HepG2 (cell line): ENCODE measurements at regions of chr11 and their contacts with region 1.

Region 1: GRCh38 chr11:117946842-117947526 is 17.8 kb upstream of the TMPRSS13 start:
- DNase-seq: peak; percentile 64
- ATAC-seq: peak; percentile 97
- H3K4me3 ChIP-seq: no peak overlapping the region
- H3K27ac ChIP-seq: no peak overlapping the region
- H3K4me1 ChIP-seq: no peaks in the 10 kb centered on the region
- H3K27me3 ChIP-seq: peaks cover 3 to 19% of the 10 kb centered on the region in 2 experiments; a peak in 2 of 5 replicates
- CTCF ChIP-seq: peak; percentile 95
- EP300 ChIP-seq: no peak
- POLR2A ChIP-seq: no peak
- RAD21 ChIP-seq: peak; percentile 85

Region 2: GRCh38 chr11:117426269-117426685 is 520.7 kb before region 1 on chr11:
- CTCF ChIA-PET with region 1: no interaction called
- POLR2A ChIA-PET with region 1: no interaction called
- in situ Hi-C with region 1: loop called (anchors 25 kb)
- intact Hi-C with region 1: loop called (anchors 10 kb)
- DNase-seq: peak; percentile 38
- ATAC-seq: peak; percentile 80
- H3K4me3 ChIP-seq: no peak overlapping the region
- H3K27ac ChIP-seq: no peak overlapping the region
- H3K4me1 ChIP-seq: peaks cover 4% of the 10 kb centered on the region; the same call in 1 of the 2 replicates
- H3K27me3 ChIP-seq: peaks cover 2 to 24% of the 10 kb centered on the region in 2 experiments; a peak in 4 of 5 replicates
- CTCF ChIP-seq: peak; percentile 95
- EP300 ChIP-seq: no peak
- POLR2A ChIP-seq: no peak
- RAD21 ChIP-seq: peak; percentile 79

Region 3: DNA sequence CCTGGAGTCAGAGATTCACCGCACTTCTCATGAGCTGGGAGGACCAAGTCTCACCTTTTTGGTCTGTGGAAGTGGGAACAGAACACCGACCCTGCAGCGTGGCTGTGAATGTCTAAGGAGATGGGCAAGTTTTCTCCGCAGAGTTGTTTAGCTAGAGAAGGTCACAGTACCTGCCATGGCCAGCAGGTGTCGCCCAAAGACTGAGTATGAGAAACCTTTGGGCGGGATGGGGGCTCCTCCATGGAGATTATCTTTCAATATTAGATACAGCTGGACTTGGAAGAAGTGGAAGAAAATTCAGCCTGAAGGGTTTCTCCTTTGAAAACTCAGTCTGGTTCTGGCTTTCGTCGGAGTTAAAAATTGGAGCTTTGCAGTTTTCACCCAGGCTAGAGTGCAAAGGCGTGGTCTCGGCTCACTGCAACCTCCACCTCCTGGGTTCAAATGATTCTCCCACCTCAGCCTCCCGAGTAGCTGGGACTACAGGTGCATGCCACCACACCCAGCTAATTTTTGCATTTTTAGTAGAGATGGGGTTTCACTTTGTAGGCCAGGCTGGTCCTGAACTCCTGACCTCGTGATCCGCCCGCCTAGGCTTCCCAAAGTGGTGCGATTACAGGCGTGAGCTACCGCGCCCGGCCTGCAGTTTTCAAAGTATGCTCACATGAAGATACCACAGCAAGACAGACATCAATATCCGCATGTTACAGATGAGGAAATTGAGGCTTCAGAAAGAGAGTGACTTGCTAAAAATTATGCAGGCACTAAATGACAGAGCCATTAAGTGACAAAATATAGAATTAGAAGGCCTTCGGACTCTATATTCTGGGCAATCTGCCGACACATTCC is 139.3 kb before region 1 on chr11:
- CTCF ChIA-PET with region 1: interaction called, 21 read pairs
- POLR2A ChIA-PET with region 1: interaction called, 3 read pairs
- in situ Hi-C with region 1: no loop called
- intact Hi-C with region 1: no loop called
- DNase-seq: no peak
- ATAC-seq: peak; percentile 56
- H3K4me3 ChIP-seq: no peak overlapping the region
- H3K27ac ChIP-seq: no peak overlapping the region
- H3K4me1 ChIP-seq: no peaks in the 10 kb centered on the region
- H3K27me3 ChIP-seq: no peaks in the 10 kb centered on the region; a peak in 1 of 5 replicates
- CTCF ChIP-seq: peak; percentile 80
- EP300 ChIP-seq: no peak
- POLR2A ChIP-seq: no peak
- RAD21 ChIP-seq: peak; percentile 57; the same call in 1 of the 2 replicates

Region 4: GRCh38 chr11:117817368-117818040 is 129.5 kb before region 1 on chr11:
- CTCF ChIA-PET with region 1: interaction called, 19 read pairs
- POLR2A ChIA-PET with region 1: no interaction called
- in situ Hi-C with region 1: loop called (anchors 5 kb)
- intact Hi-C with region 1: loop called (anchors 1 kb)
- DNase-seq: peak; percentile 49
- ATAC-seq: peak; percentile 45
- H3K4me3 ChIP-seq: peak overlapping the region in 1 of 3 experiments; percentile 61; a peak in 1 of 6 replicates
- H3K27ac ChIP-seq: no peak overlapping the region
- H3K4me1 ChIP-seq: peaks cover 73% of the 10 kb centered on the region
- H3K27me3 ChIP-seq: peaks cover 0 to 5% of the 10 kb centered on the region in 2 experiments; a peak in 1 of 5 replicates
- CTCF ChIP-seq: peak; percentile 92
- EP300 ChIP-seq: no peak
- POLR2A ChIP-seq: no peak
- RAD21 ChIP-seq: peak; percentile 71

Region 5: DNA sequence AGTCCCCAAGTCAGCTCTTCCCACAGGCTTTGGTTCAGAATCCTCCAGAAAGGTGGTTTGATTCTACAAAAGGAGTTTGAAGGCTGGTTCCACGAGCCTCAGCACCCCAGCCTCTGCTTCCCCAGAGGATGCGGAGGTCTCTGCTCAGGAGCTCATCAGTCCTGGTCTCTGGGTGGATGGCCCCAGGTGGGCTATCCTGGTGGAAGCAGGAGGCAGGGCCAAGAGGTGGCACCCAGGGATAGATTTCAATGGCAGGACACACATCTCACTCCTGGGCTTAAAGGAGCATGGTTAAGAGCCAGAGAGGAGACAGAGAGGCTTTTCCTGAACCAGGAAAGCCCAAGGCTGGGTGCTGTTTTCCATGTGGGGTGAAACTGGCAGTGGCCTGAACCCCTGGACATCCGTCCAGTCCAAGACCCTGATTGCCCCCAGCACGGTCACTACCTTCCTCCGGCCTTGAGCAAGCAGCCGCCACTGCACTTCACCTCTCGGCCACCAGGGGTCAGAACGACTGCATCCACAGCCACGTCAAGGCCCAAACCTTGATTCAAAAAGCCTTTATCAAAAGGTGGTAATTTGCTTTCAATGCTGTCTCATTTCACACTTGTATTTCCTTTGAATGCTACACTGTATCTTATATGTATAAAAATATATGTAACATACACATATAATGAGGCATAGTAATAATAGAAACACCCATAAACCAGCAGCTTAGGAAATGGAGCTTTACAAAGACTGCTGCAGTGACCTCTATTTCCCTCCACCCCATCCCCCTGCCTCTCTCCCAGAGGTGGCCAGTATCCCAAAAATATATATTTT is 103.1 kb before region 1 on chr11:
- CTCF ChIA-PET with region 1: interaction called, 33 read pairs
- POLR2A ChIA-PET with region 1: interaction called, 4 read pairs
- in situ Hi-C with region 1: no loop called
- intact Hi-C with region 1: loop called (anchors 1 kb)
- DNase-seq: no peak
- ATAC-seq: peak; percentile 83
- H3K4me3 ChIP-seq: no peak overlapping the region
- H3K27ac ChIP-seq: no peak overlapping the region
- H3K4me1 ChIP-seq: no peaks in the 10 kb centered on the region
- H3K27me3 ChIP-seq: peaks cover 8 to 27% of the 10 kb centered on the region in 2 experiments; a peak in 3 of 5 replicates
- CTCF ChIP-seq: peak; percentile 91
- EP300 ChIP-seq: no peak
- POLR2A ChIP-seq: no peak
- RAD21 ChIP-seq: peak; percentile 59; the same call in 1 of the 2 replicates

Region 6: GRCh38 chr11:117876341-117877119 is 70.5 kb before region 1 on chr11 and contains the start of gene FXYD6:
- CTCF ChIA-PET with region 1: no interaction called
- POLR2A ChIA-PET with region 1: no interaction called
- in situ Hi-C with region 1: no loop called
- intact Hi-C with region 1: no loop called
- DNase-seq: no peak
- ATAC-seq: no peak
- H3K4me3 ChIP-seq: no peak within 1 kb of the TSS
- H3K27ac ChIP-seq: no peak within 1 kb of the TSS
- H3K4me1 ChIP-seq: no peaks in the 10 kb centered on the region
- H3K27me3 ChIP-seq: peaks cover 10 to 97% of the 10 kb centered on the region in 2 experiments
- CTCF ChIP-seq: no peak
- EP300 ChIP-seq: no peak
- POLR2A ChIP-seq: no peak
- RAD21 ChIP-seq: no peak
- total RNA-seq, gene FXYD6: not detected in 2 replicates

Region 7: DNA sequence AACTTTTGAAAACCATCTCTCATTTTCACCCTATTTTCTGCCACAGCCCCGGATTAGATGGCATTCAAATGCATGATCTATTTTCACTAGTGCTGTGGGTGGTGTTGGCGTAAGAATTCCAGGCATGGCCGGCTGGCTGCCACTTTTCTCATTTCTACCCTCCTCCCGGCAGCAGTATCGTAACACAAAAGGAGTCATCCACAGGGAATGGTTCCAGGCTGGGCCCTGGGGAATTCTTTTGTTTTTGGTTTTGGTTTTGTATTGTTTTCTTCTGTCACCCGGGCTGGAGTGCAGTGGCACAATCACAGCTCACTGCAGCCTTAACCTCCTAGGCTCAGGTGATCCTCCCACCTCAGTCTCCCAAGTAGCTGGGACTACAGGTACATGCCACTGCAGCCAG is 264.0 kb after region 1 on chr11:
- CTCF ChIA-PET with region 1: no interaction called
- POLR2A ChIA-PET with region 1: no interaction called
- in situ Hi-C with region 1: no loop called
- intact Hi-C with region 1: no loop called
- DNase-seq: no peak
- ATAC-seq: no peak
- H3K4me3 ChIP-seq: no peak overlapping the region
- H3K27ac ChIP-seq: peak overlapping the region; percentile 95
- H3K4me1 ChIP-seq: peaks cover 88% of the 10 kb centered on the region
- H3K27me3 ChIP-seq: no peaks in the 10 kb centered on the region
- CTCF ChIP-seq: no peak
- EP300 ChIP-seq: no peak
- POLR2A ChIP-seq: no peak
- RAD21 ChIP-seq: no peak